HEK293 (cell line): ENCODE measurements at regions of chr17 and their contacts with region 1.

Region 1: GRCh38 chr17:1573916-1574696 is 11.5 kb upstream of the PITPNA start:
- H3K4me3 ChIP-seq: no peak overlapping the region
- H3K27ac ChIP-seq: no peak overlapping the region
- H3K4me1 ChIP-seq: no peaks in the 10 kb centered on the region; the same call in 1 of the 2 replicates
- CTCF ChIP-seq: peak; percentile 98

Region 2: GRCh38 chr17:1542316-1542715 is 31.8 kb before region 1 on chr17:
- CTCF ChIA-PET with region 1: no interaction called
- POLR2A ChIA-PET with region 1: no interaction called
- H3K4me3 ChIP-seq: no peak overlapping the region
- H3K27ac ChIP-seq: no peak overlapping the region
- H3K4me1 ChIP-seq: no peaks in the 10 kb centered on the region
- CTCF ChIP-seq: no peak

Region 3: GRCh38 chr17:1562176-1562643 is 11.9 kb before region 1 on chr17:
- CTCF ChIA-PET with region 1: interaction called, 14 read pairs
- POLR2A ChIA-PET with region 1: interaction called, 6 read pairs
- H3K4me3 ChIP-seq: peak overlapping the region; percentile 86
- H3K27ac ChIP-seq: peak overlapping the region; percentile 87
- H3K4me1 ChIP-seq: peaks cover 6% of the 10 kb centered on the region
- CTCF ChIP-seq: no peak

Region 4: GRCh38 chr17:1617620-1618174 is 43.6 kb after region 1 on chr17:
- CTCF ChIA-PET with region 1: interaction called, 16 read pairs
- POLR2A ChIA-PET with region 1: interaction called, 3 read pairs
- H3K4me3 ChIP-seq: no peak overlapping the region
- H3K27ac ChIP-seq: no peak overlapping the region
- H3K4me1 ChIP-seq: peaks cover 6% of the 10 kb centered on the region; the same call in 1 of the 2 replicates
- CTCF ChIP-seq: peak; percentile 30; the same call in 1 of the 2 replicates

Region 5: DNA sequence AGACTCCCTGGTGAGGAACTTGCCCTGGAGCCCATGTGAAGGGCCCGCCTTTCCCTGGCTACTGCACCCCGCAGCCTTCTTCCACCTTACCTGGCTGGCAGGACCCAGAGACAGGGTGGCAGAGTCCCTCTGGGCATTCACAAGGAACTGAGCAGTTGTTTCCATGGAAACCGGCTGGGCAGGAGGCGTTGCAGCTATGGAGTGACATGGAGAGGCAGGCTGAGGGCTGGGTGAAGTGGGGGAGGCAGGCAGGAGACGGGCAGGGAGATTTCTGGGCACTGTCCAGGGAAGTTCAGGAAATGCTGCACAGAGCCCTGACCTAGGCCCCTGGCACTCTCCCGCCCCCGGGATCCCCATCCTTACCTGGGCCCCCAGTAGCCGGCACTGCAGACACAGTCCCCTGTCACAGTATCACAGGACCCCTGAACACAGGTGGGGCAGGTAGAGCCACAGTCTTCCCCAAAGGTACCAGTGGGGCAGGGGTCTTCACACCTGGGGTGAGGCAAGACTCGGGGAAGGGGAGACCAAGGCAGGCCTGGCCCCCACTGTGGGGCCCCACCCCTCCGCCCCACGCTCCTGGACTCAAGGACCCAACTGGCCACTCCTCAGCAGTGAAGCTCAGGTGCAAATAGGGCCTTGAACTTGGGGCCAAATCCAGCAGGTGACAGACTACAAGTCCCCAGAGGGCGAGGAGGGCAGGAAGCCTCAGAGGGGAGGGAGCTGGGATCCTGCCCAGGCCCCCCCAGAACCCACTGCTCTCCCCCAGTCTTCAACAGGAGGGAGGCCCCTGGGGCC is 65.6 kb after region 1 on chr17:
- CTCF ChIA-PET with region 1: interaction called, 69 read pairs
- POLR2A ChIA-PET with region 1: interaction called, 3 read pairs
- H3K4me3 ChIP-seq: no peak overlapping the region
- H3K27ac ChIP-seq: no peak overlapping the region
- H3K4me1 ChIP-seq: 0 out of 2 replicates have a peak, but pooled peaks cover 2% of the 10 kb centered on the region
- CTCF ChIP-seq: no peak

Region 6: DNA sequence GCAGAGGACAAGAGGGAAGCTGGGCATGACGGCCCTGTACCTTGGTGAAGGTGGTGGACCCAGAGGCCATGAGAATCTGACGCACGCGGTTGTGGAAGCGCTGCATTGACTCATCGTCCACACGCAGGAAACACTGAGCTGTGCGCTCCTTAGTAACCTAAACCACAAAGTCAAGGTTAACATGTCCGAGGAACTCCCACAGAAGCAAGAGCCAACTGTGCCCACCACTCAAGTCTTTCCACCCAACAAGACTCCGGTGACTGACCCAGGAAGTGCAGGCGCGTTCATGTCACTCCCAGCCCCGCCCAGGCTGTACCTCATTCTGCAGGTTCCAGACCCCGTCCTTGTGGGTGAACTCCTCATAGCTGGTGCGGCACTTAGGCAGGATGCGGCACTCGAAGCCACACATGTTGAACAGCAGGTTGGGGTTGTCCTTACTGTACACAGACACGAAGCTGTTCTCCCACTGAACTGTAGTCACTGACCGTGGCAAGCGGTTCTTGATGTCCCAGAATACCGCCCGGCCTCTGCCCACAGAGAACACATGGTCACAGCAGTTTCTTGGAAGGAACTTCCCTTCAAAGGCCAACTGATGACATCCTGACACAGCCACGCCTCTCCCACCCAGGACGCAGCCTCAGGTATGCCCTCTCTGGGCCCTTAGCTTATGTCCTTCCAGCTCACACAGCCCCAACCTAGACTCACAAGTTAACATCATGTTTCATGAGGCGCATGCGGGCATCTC is 99.1 kb after region 1 on chr17:
- CTCF ChIA-PET with region 1: interaction called, 23 read pairs
- POLR2A ChIA-PET with region 1: no interaction called
- H3K4me3 ChIP-seq: no peak overlapping the region
- H3K27ac ChIP-seq: no peak overlapping the region
- H3K4me1 ChIP-seq: no peaks in the 10 kb centered on the region
- CTCF ChIP-seq: no peak